ENCODE measurements at regions of chr2 and their contacts with region 1.

Region 1: DNA sequence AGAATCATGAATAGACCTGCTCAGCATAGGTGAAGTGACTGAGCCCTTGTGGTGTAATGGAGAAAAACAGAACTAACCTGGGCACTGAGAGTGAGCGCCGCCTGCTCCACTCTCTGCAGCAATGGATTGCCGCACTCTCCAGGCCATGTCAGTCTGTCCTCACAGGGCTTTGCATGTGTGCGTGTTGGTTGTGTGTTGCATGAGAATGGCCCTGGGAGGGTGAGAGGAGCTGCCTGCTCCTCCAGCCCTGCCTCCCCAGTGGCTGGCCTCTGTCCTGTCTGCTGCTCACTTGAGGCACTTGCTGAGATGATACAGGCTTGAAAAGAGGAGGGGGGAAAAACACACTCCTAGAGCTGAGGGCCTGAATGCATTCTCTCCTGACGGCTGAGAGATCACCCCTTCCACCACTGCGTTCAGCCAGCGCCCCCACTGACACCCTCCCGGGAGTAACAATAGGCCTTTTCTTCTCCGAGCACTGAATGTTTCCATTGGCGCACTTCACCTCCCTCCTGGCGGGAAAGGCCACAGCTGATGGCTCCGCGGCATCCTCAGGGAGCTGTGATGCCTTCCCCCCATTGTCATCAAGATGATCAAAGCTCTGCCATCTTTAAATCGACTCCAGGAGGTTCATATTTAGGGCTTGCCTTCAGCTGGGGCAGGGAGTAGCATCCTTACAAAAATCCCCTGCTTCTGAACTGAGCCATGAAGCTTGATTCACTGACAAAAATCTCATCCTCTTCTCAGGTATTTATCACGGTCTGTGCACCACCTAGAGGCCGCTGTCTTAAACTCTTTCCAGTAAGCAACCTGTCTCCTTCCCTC is 49.9 kb upstream of the DAPL1 start:
- DNase-seq: peak; percentile 74
- ATAC-seq: peak; percentile 88
- H3K4me3 ChIP-seq: no peak overlapping the region
- H3K27ac ChIP-seq: no peak overlapping the region
- H3K4me1 ChIP-seq: no peaks in the 10 kb centered on the region
- H3K27me3 ChIP-seq: peaks cover 31% of the 10 kb centered on the region
- CTCF ChIP-seq: peak; percentile 68
- POLR2A ChIP-seq: 0 out of 2 replicates have a peak, but pooled peaks have one; percentile 23
- RAD21 ChIP-seq: peak; percentile 81

Region 2: GRCh38 chr2:158024288-158024898 is 720.9 kb before region 1 on chr2:
- CTCF ChIA-PET with region 1: interaction called, 12 read pairs
- POLR2A ChIA-PET with region 1: no interaction called
- dilution Hi-C with region 1: no loop called
- in situ Hi-C with region 1: no loop called
- intact Hi-C with region 1: loop called (anchors 2 kb)
- DNase-seq: peak; percentile 31
- ATAC-seq: peak; percentile 76
- H3K4me3 ChIP-seq: no peak overlapping the region
- H3K27ac ChIP-seq: no peak overlapping the region
- H3K4me1 ChIP-seq: peaks cover 2% of the 10 kb centered on the region; the same call in 1 of the 2 replicates
- H3K27me3 ChIP-seq: peaks cover 6% of the 10 kb centered on the region; the same call in 1 of the 2 replicates
- CTCF ChIP-seq: peak; percentile 82
- POLR2A ChIP-seq: no peak
- RAD21 ChIP-seq: peak; percentile 70

Region 3: DNA sequence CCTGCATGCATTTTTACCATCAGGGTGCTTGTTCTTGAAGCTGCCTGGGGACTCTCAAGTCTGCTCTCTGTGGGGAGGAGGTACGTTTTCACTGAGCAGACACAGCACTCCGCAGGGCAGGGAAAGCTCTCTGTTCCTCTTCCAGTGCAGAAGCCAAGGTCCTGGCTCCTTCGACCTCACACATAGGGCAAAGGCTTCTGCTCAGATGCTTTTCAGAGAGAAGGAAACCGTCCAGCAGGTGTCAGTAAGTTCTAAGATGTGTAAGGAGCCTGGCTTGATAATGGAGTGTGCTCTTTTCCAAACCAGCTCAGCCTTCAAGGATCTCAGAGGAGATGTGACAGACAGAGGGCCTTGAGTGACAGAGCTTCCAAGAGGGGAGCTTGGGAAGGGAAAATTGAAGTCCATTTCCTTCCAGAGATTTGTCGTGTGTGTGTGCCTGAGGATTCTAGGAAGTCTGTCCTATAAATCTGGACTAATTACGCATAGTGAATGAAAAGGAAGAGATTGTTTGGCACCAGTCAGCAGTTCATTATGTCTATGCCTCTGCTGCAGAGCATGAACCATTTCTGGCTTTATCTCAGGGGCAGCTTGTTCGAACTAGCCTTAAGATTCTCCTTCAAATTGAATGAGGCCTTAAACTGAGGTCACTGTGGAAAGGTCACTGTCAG is 710.9 kb before region 1 on chr2:
- CTCF ChIA-PET with region 1: interaction called, 4 read pairs
- POLR2A ChIA-PET with region 1: no interaction called
- dilution Hi-C with region 1: no loop called
- in situ Hi-C with region 1: loop called (anchors 5 kb)
- intact Hi-C with region 1: loop called (anchors 1 kb)
- DNase-seq: peak; percentile 48
- ATAC-seq: peak; percentile 83
- H3K4me3 ChIP-seq: no peak overlapping the region
- H3K27ac ChIP-seq: no peak overlapping the region
- H3K4me1 ChIP-seq: no peaks in the 10 kb centered on the region
- H3K27me3 ChIP-seq: peaks cover 14% of the 10 kb centered on the region
- CTCF ChIP-seq: peak; percentile 46
- POLR2A ChIP-seq: no peak
- RAD21 ChIP-seq: peak; percentile 54

Region 4: GRCh38 chr2:158179660-158180059 is 565.6 kb before region 1 on chr2:
- CTCF ChIA-PET with region 1: interaction called, 5 read pairs
- POLR2A ChIA-PET with region 1: no interaction called
- dilution Hi-C with region 1: no loop called
- in situ Hi-C with region 1: loop called (anchors 5 kb)
- intact Hi-C with region 1: loop called (anchors 1 kb)
- DNase-seq: peak; percentile 26
- ATAC-seq: peak; percentile 54
- H3K4me3 ChIP-seq: no peak overlapping the region
- H3K27ac ChIP-seq: no peak overlapping the region
- H3K4me1 ChIP-seq: no peaks in the 10 kb centered on the region
- H3K27me3 ChIP-seq: peaks cover 2% of the 10 kb centered on the region
- CTCF ChIP-seq: peak; percentile 54
- POLR2A ChIP-seq: no peak
- RAD21 ChIP-seq: peak; percentile 66